AG04450 (cell line): ENCODE measurements at regions of chr17 and their contacts with region 1.

Region 1: DNA sequence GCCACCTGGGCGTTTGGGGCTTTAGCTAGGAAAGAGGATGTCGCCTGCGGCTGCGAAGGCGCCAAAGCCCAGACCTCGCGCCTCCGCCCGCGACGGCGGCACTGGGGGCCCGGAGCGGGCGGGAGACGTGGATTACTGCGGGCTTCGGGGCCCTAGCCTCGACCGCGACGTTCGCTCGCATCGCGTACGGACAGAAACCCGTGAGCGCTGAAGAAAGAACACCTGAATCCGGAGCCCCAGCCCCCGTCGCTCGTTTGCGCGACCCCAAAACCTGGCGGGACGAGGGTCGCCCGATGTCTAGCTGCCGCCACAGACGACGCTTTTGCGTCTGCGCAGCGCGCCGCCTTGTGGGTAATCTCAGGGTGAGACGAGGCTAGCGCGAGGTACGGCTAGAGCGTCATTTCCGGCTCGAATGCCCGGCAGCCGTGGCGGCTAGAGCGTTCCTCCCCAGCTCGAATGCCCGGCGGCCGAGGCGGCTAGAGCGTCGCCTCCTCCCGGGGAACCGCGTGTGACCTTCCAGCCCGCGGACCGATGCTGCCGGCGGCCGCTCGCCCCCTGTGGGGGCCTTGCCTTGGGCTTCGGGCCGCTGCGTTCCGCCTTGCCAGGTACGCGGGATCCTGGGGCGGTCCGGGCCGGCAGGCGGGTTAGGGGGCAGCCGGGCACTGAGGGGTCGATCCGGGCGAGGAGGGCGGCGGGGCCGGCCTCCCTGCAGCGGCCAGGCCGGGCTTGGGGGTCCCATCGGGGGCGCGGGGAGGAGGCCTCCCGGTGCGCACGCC is at the start of gene MRPL12:
- DNase-seq: peak; percentile 58
- H3K4me3 ChIP-seq: peak within 1 kb of the TSS; percentile 90
- H3K27ac ChIP-seq: peak within 1 kb of the TSS; percentile 87
- H3K27me3 ChIP-seq: no peaks in the 10 kb centered on the region
- CTCF ChIP-seq: no peak
- polyA plus RNA-seq, gene MRPL12: 52.1 and 69.2 TPM in 2 replicates

Region 2: DNA sequence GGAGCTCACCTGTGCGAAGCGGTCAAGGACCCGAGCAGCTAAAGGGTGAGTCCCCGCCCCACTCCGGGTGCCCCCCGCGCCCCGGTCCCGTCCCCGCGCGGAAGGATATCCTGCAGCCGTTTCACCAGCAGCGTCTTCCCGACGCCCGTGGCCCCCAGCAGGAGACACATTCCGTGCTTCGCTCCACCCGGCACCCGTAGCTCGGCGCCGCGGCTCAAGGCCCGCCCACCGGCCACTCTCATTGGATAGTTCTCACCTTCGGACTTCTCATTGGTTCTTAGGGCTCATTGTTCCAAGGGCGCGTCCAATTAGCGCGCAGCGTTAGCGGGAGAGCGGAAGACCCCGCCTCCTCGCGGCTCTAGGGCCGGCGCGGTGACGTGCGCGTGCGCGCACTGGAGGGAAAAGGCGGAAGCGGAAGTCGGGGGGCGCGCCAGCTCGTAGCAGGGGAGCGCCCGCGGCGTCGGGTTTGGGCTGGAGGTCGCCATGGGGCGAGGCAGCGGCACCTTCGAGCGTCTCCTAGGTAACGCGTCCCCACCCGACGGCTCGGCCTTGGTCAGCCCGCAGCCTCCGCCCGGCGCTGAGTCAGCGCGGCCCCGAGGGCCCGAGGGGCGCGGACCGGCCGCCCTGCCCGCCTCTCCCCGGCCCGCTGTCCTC is 19.4 kb before region 1 on chr17 and contains the starts of genes ARL16 and HGS:
- CTCF ChIA-PET with region 1: interaction called, 3 read pairs
- POLR2A ChIA-PET with region 1: interaction called, 35 read pairs
- DNase-seq: peak; percentile 99
- H3K4me3 ChIP-seq: peak within 1 kb of the TSS; percentile 92
- H3K27ac ChIP-seq: peak within 1 kb of the TSS; percentile 94
- H3K27me3 ChIP-seq: no peaks in the 10 kb centered on the region
- CTCF ChIP-seq: no peak
- polyA plus RNA-seq, gene ARL16: 44.7 and 48.0 TPM in 2 replicates
- polyA plus RNA-seq, gene HGS: 71.5 and 83.0 TPM in 2 replicates